ENCODE measurements at regions of chrX and their contacts with region 1.

Region 1: DNA sequence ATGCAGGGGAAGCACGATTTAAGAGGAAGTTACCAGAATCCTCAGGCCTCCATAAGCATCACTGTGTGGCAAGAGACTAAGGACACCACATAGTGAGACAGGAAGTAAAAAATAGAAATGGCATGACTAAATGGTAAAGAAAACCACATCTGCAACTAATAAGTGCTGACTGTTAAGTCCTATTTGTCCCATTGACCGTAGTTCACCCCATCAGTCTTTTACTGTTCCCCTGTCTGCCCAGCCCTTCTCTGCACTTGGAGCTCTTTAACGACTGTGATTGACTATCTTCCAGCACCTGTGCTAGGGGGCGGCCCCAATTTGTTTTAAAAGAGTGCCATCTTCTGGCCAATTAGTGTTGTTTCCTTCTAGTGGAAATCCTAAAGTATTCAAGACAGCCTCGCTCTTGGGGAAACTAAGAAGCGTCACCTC is 94.2 kb downstream of the MAOA start:
- DNase-seq: peak; percentile 1 to 72 (median 19)
- ATAC-seq: peak; percentile 70
- H3K4me3 ChIP-seq: no peak overlapping the region
- H3K4me3 Mint-ChIP-seq: no peak overlapping the region
- H3K27ac ChIP-seq: no peak overlapping the region
- H3K27ac Mint-ChIP-seq: no peak overlapping the region
- H3K4me1 ChIP-seq: no peaks in the 10 kb centered on the region
- H3K4me1 Mint-ChIP-seq: no peaks in the 10 kb centered on the region
- H3K27me3 ChIP-seq: no peaks in the 10 kb centered on the region
- H3K27me3 Mint-ChIP-seq: no peaks in the 10 kb centered on the region
- CTCF ChIP-seq: peak; percentile 63

Region 2: DNA sequence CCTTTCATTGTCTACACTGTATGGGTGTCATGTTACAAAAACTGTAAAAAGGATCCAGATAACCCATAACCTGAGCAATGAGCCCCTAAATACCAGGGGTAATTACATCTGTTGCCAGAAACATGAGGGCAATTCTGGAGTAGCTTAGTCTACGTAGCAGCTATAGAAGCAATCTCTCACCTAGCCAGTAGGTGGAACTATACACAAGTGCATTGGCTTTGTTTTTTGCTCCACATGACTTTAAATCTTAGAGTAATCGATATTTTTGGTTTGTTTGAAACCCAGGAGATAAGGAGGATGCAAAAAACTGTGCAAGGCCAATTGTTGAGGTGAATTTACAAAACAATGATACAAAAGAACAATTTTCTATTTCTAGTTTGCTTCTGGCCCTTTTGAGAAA is 1968.8 kb before region 1 on chrX:
- CTCF ChIA-PET with region 1: interaction called, 4 read pairs
- POLR2A ChIA-PET with region 1: no interaction called
- intact Hi-C with region 1: loop called (anchors 1 to 5 kb)
- DNase-seq: peak in 3 of 14 experiments; percentile 40 to 66 (median 61)
- ATAC-seq: peak; percentile 43
- H3K4me3 ChIP-seq: no peak overlapping the region
- H3K4me3 Mint-ChIP-seq: no peak overlapping the region
- H3K27ac ChIP-seq: no peak overlapping the region
- H3K27ac Mint-ChIP-seq: no peak overlapping the region
- H3K4me1 ChIP-seq: no peaks in the 10 kb centered on the region
- H3K4me1 Mint-ChIP-seq: peaks cover 17% of the 10 kb centered on the region
- H3K27me3 ChIP-seq: no peaks in the 10 kb centered on the region
- H3K27me3 Mint-ChIP-seq: no peaks in the 10 kb centered on the region
- CTCF ChIP-seq: peak; percentile 69

Region 3: GRCh38 chrX:41802958-41803357 is 1947.3 kb before region 1 on chrX:
- CTCF ChIA-PET with region 1: no interaction called
- POLR2A ChIA-PET with region 1: no interaction called
- intact Hi-C with region 1: loop called in 1 of 2 experiments (anchors 1 kb)
- DNase-seq: no peak
- ATAC-seq: no peak
- H3K4me3 ChIP-seq: no peak overlapping the region
- H3K4me3 Mint-ChIP-seq: no peak overlapping the region
- H3K27ac ChIP-seq: no peak overlapping the region
- H3K27ac Mint-ChIP-seq: no peak overlapping the region
- H3K4me1 ChIP-seq: peaks cover 11% of the 10 kb centered on the region
- H3K4me1 Mint-ChIP-seq: peaks cover 38% of the 10 kb centered on the region
- H3K27me3 ChIP-seq: no peaks in the 10 kb centered on the region
- H3K27me3 Mint-ChIP-seq: no peaks in the 10 kb centered on the region
- CTCF ChIP-seq: no peak

Region 4: DNA sequence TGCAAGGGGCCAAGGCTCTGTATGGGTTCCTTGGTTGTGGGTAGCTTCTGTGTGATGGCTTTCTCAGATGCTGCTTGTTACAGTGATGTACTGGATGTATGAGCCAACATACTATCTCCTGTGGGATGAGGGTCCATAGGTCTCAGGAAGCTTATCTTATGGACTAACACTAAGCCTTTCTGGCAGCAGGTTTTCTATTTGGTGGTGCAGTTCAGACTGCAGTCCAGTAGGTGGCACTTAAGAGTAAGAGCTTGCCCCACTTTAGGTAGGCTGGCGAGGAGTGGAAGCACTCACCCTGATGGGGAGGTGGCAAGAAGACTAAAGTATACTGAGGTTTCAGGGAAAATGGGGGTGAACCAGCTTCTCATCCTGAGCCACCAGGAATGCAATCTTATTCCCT is 400.9 kb before region 1 on chrX:
- CTCF ChIA-PET with region 1: no interaction called
- POLR2A ChIA-PET with region 1: no interaction called
- intact Hi-C with region 1: loop called in 1 of 2 experiments (anchors 5 kb)
- DNase-seq: peak in 12 of 14 experiments; percentile 0 to 58 (median 13)
- ATAC-seq: no peak
- H3K4me3 ChIP-seq: no peak overlapping the region
- H3K4me3 Mint-ChIP-seq: no peak overlapping the region
- H3K27ac ChIP-seq: no peak overlapping the region
- H3K27ac Mint-ChIP-seq: no peak overlapping the region
- H3K4me1 ChIP-seq: no peaks in the 10 kb centered on the region
- H3K4me1 Mint-ChIP-seq: peaks cover 14% of the 10 kb centered on the region
- H3K27me3 ChIP-seq: no peaks in the 10 kb centered on the region
- H3K27me3 Mint-ChIP-seq: no peaks in the 10 kb centered on the region
- CTCF ChIP-seq: peak; percentile 43

Region 5: DNA sequence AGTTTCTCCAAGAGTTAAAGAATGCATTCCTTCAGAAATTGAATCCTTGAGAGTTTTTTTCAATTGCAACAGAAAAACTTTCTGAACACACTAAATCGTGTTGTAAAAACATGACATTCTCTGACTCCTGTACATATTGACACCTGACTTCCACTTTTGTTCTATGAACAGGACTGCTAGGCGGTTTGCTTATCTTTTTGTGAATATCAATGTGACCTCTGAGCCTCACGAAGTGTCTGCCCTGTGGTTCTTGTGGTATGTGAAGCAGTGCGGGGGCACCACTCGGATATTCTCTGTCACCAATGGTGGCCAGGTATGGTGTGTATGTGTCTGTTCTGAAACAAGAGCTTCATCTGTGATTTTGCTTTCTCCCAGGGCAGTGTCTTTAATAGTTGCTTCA is 22.3 kb before region 1 on chrX:
- CTCF ChIA-PET with region 1: no interaction called
- POLR2A ChIA-PET with region 1: no interaction called
- intact Hi-C with region 1: no loop called
- DNase-seq: no peak
- ATAC-seq: no peak
- H3K4me3 ChIP-seq: no peak overlapping the region
- H3K4me3 Mint-ChIP-seq: no peak overlapping the region
- H3K27ac ChIP-seq: no peak overlapping the region
- H3K27ac Mint-ChIP-seq: no peak overlapping the region
- H3K4me1 ChIP-seq: no peaks in the 10 kb centered on the region
- H3K4me1 Mint-ChIP-seq: no peaks in the 10 kb centered on the region
- H3K27me3 ChIP-seq: no peaks in the 10 kb centered on the region
- H3K27me3 Mint-ChIP-seq: peaks cover 5% of the 10 kb centered on the region
- CTCF ChIP-seq: no peak

Region 6: GRCh38 chrX:44332437-44332836 is 582.2 kb after region 1 on chrX:
- CTCF ChIA-PET with region 1: no interaction called
- POLR2A ChIA-PET with region 1: no interaction called
- intact Hi-C with region 1: no loop called
- DNase-seq: no peak
- ATAC-seq: no peak
- H3K4me3 ChIP-seq: no peak overlapping the region
- H3K4me3 Mint-ChIP-seq: no peak overlapping the region
- H3K27ac ChIP-seq: no peak overlapping the region
- H3K27ac Mint-ChIP-seq: no peak overlapping the region
- H3K4me1 ChIP-seq: peaks cover 25% of the 10 kb centered on the region
- H3K4me1 Mint-ChIP-seq: peaks cover 40% of the 10 kb centered on the region
- H3K27me3 ChIP-seq: no peaks in the 10 kb centered on the region
- H3K27me3 Mint-ChIP-seq: no peaks in the 10 kb centered on the region
- CTCF ChIP-seq: no peak

Measured in CD4-positive, alpha-beta T cell (primary cell).